GM18951 (cell line): ENCODE measurements at regions of chr20 and their contacts with region 1.

Region 1: DNA sequence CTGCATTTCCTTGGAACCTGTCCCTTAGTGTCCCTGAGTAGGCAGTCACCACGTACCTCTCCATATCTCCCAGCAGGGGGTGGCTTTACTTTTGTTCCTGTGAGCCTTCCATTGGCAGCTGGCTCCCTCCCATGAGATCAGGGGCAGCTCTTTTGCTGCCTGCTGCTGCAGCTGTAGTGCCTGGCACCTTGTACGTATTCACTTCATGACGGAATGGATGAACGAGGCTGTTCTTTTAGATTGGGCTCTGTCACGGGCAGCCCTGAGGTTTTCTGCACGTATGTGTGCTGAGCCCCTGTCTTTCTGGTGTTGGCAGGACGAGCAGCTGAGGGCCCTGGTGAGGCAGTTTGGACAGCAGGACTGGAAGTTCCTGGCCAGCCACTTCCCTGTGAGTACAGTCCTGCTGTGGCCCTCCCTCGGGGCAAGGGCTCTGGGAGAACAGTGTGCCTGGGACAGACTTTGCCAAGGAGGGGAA is 14.6 kb downstream of the MYBL2 start:
- POLR2A ChIP-seq: no peak

Region 2: DNA sequence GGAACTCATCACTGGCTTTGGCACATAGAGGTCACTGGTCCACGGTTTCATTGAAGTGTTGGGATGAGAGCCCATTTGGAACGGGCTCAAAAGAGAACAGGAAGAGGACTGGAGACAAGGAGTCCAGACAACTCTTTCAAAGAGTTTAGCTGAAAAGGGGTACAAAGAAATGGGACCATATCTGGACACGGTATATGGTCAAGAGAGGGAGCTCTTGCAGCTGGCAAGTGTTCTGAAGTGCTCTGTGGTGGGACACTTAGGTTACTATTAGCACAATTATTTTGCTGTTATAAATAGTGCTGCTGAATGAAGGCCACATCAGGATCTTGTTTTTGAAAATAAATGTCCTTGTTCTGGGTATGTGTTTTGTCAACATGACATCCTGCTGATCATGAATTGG is 118.1 kb before region 1 on chr20:
- in situ Hi-C with region 1: loop called (anchors 10 kb)
- POLR2A ChIP-seq: no peak

Region 3: GRCh38 chr20:44576297-44576696 is 894.8 kb after region 1 on chr20:
- in situ Hi-C with region 1: no loop called
- POLR2A ChIP-seq: no peak